WTC11 (cell line): ENCODE measurements at regions of chr17 and their contacts with region 1.

Region 1: GRCh38 chr17:58517734-58518609 is 3.5 kb upstream of the MTMR4 start:
- DNase-seq: peak; percentile 99
- ATAC-seq: peak; percentile 78
- H3K4me3 Mint-ChIP-seq: peak overlapping the region; percentile 96
- H3K27ac Mint-ChIP-seq: peak overlapping the region; percentile 98
- H3K4me1 Mint-ChIP-seq: peaks cover 30% of the 10 kb centered on the region
- H3K27me3 Mint-ChIP-seq: no peaks in the 10 kb centered on the region; the same call in 1 of the 2 replicates
- CTCF ChIP-seq: no peak

Region 2: DNA sequence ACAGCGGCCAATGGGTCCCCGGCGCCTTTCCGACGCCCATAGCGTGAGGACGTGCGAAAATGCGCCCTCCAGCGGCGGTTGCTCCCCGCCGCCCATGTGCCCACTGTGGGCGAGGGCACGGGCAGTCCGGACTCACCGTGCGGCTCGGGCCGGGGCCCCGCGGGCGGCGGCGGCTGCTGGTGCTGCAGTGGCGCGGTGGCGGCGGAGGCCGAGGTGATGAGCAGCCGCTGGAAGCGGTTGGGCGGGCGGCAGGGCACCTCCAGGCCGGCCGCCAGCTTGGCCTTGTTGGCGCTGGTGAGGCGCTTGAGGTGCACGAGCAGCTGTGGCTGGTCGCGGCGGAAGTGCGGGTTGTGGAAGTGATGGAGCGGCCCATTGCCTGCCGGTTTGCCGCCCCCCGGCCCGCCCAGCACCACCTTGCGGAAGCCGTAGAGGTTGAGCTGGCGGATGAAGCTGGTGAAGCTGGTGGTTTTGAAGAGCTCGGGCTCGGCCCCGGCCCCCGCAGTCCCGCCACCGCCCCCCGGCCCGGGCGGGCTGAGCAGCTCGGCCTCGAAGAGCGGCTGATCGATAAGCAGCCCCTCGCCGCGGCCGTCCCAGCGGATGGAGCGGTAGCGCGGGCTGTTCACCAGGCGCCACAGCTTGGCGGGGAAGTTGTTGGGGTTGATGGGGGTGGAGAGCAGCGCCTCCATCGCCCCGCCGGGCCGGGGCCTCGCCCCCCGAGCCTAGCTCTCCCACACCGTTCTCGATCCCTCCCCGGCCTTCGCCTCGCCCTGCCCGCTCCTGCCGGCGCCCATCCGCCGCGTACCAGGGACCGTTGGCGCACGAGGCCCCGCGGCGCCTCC is 30.2 kb before region 1 on chr17 and contains the start of gene HSF5:
- CTCF ChIA-PET with region 1: interaction called, 10 read pairs
- POLR2A ChIA-PET with region 1: no interaction called
- DNase-seq: peak; percentile 78
- ATAC-seq: peak; percentile 89
- H3K4me3 Mint-ChIP-seq: no peak within 1 kb of the TSS
- H3K27ac Mint-ChIP-seq: no peak within 1 kb of the TSS
- H3K4me1 Mint-ChIP-seq: no peaks in the 10 kb centered on the region
- H3K27me3 Mint-ChIP-seq: peaks cover 21% of the 10 kb centered on the region
- CTCF ChIP-seq: peak; percentile 47
- total RNA-seq, gene HSF5: 0.07 to 0.11 TPM (median 0.09 TPM) in 3 replicates

Region 3: DNA sequence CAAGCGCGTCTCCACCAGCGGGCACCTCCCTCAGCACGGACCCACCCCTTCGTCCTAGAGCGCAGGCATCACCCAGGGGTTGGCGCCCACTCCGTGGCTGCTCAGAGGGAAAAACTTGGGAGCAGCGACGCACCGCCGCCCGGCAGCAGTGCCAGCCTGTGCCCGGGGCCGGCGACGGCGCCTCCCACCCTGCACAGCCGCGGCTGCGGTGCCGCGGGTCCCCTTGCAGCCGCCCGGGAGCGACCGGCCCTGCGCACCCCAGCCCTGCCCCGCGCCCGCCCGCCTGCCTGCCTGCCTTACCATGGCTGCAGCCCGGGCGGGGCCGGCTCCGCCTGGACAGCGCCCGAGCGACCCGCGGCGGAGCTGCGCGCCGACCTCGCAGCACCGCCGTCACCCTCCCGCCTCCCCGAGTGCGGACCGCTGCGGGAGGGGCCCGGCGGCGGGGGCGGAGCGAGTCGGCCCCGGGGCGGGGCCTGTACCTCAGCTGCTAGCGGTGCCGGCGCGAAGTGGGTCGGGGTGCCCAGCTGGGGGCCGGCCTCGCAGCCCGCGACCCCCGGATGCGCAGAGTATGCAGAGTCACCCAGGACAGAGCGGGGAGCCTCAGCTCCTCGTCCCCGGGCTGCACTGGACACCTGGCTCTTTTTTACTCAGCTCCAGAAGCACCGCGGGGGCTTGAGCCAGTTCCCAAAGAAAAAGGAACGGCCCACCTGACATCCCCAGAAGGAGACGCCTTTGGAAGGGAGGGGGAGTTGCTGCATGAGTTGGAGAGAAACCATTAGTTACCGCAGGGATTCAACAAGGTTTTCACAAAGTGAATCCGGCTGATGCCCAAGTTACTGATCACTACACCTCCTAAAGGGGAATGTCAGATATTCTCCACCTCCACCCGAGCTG is 13.9 kb after region 1 on chr17:
- CTCF ChIA-PET with region 1: interaction called, 42 read pairs
- POLR2A ChIA-PET with region 1: no interaction called
- DNase-seq: peak; percentile 70
- ATAC-seq: peak; percentile 79
- H3K4me3 Mint-ChIP-seq: peak overlapping the region; percentile 68
- H3K27ac Mint-ChIP-seq: no peak overlapping the region
- H3K4me1 Mint-ChIP-seq: peaks cover 39% of the 10 kb centered on the region
- H3K27me3 Mint-ChIP-seq: peaks cover 52% of the 10 kb centered on the region
- CTCF ChIP-seq: no peak

Region 4: DNA sequence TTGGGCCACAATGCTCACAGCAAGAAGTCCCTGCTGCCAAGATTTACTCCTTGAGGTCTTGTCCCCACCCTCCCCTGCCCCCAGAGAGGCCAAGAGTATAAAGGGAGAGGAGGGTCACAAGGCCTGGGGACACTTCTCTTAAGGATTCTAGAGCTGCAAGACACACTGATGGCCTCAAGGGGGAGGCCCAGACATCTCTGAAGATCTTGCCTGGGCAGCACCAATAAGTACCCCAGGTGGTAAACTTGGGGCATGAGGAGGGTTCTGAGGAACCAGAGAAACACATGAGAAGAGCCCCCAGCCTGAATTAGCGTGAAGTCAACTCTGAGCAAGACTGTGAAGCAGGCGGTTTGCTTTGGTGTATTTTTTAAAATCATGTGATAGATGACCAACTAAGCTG is 23.3 kb after region 1 on chr17:
- CTCF ChIA-PET with region 1: interaction called, 43 read pairs
- POLR2A ChIA-PET with region 1: interaction called, 7 read pairs
- DNase-seq: peak; percentile 42
- ATAC-seq: peak; percentile 96
- H3K4me3 Mint-ChIP-seq: no peak overlapping the region
- H3K27ac Mint-ChIP-seq: no peak overlapping the region
- H3K4me1 Mint-ChIP-seq: peaks cover 13% of the 10 kb centered on the region
- H3K27me3 Mint-ChIP-seq: peaks cover 7% of the 10 kb centered on the region
- CTCF ChIP-seq: peak; percentile 46; the same call in 1 of the 2 replicates

Region 5: DNA sequence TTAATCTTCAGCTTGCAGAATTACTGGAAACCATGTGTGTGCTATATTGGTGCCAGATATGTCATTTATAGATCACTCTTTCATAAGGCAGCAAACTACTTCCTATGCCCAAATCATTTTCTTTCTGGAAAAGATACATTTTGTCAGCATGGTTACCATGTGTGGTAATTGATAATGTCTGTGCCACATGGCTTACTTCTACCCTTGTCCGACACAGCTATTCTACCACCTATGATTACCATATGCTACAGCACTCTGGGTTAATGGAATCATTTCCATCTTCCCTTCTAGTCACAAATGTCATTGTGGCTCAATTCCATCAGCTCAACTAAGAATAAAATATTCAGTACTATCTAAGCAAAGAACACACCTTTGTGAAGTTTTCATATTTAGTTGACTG is 229.7 kb after region 1 on chr17:
- CTCF ChIA-PET with region 1: no interaction called
- POLR2A ChIA-PET with region 1: no interaction called
- DNase-seq: no peak
- ATAC-seq: no peak
- H3K4me3 Mint-ChIP-seq: no peak overlapping the region
- H3K27ac Mint-ChIP-seq: no peak overlapping the region
- H3K4me1 Mint-ChIP-seq: no peaks in the 10 kb centered on the region
- H3K27me3 Mint-ChIP-seq: 0 out of 2 replicates have a peak, but pooled peaks cover 1% of the 10 kb centered on the region
- CTCF ChIP-seq: no peak

Region 6: GRCh38 chr17:59004338-59005111 is 486.6 kb after region 1 on chr17:
- CTCF ChIA-PET with region 1: interaction called, 12 read pairs
- POLR2A ChIA-PET with region 1: interaction called, 5 read pairs
- DNase-seq: peak; percentile 78
- ATAC-seq: peak; percentile 80
- H3K4me3 Mint-ChIP-seq: no peak overlapping the region
- H3K27ac Mint-ChIP-seq: peak overlapping the region; percentile 48; the same call in 1 of the 2 replicates
- H3K4me1 Mint-ChIP-seq: peaks cover 6% of the 10 kb centered on the region
- H3K27me3 Mint-ChIP-seq: no peaks in the 10 kb centered on the region
- CTCF ChIP-seq: peak; percentile 83